Gastrocnemius medialis (tissue), 4 donors: ENCODE measurements at regions of chr10 and their contacts with region 1.

Region 1: DNA sequence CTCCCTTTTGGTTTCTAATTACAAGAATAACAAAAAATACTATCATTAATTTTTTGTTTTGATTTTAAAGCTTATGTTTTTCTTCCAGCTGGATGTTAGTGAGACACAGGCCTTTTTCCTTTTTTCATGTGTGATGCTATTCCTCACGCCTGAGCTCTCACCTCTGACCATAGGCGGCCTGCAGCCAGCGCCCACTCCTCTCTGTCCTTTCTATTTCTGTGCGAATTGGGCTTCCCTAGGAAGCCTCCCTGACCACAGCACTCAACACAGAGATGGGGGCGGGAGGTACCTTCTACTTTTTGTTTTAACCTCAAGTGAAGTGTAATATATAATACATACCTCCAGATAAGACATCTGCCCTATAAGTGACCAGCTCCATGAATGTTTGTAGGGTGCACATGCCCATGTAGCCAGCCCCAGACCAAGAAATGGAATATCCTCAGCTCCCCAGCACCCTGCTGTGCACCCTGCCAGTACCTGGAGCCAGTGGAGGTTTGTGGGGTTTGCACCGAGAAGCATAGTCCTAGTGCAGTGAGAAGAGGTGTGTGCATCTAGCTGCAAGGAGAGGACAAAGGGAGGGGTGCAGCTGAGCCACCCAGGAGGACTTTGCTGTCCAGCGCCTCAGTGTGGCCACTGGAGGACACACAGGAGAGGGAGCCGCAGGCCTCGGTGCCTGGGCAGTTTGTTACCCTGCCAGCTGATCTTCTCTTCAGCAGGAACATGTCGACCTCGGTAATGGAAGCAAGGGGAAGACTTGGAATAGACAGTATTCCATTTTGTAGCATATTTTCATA is 38.5 kb downstream of the BNIP3 start:
- DNase-seq: no peak
- ATAC-seq: no peak
- H3K4me3 ChIP-seq: no peak overlapping the region
- H3K27ac ChIP-seq: no peak overlapping the region
- H3K4me1 ChIP-seq: peaks cover under 1% of the 10 kb centered on the region in 2 donors
- H3K27me3 ChIP-seq: no peaks in the 10 kb centered on the region
- CTCF ChIP-seq: peak in 4 of 5 experiments; percentile 17 to 39 (median 32)
- POLR2A ChIP-seq: no peak

Region 2: GRCh38 chr10:131300508-131300907 is 642.7 kb before region 1 on chr10:
- in situ Hi-C with region 1: no loop called
- intact Hi-C with region 1: no loop called
- DNase-seq: no peak
- ATAC-seq: no peak
- H3K4me3 ChIP-seq: no peak overlapping the region
- H3K27ac ChIP-seq: no peak overlapping the region
- H3K4me1 ChIP-seq: no peaks in the 10 kb centered on the region
- H3K27me3 ChIP-seq: peaks cover 0 to 4% (median 0%) of the 10 kb centered on the region in 3 donors
- CTCF ChIP-seq: no peak
- POLR2A ChIP-seq: no peak

Region 3: DNA sequence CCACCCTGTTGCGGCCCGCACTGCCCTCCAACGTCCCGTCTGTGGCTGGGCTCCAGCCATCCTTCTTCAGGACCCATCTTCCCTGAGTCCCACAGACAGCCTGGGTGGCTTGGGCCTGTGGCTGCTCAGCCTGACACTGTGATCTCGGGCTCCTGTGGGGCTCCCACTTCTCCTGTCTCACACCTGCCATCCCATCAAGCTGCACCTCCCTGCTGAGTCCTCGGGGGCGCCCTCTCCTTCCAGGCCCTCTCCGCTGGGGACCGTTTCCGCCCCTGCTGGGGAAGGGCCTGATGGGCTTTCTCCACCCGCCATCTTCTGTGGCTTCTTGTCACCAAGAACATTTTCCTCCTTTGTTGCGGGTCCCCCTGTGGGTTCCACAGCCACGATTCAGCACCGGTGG is 216.3 kb before region 1 on chr10:
- in situ Hi-C with region 1: no loop called
- intact Hi-C with region 1: no loop called
- DNase-seq: no peak
- ATAC-seq: no peak
- H3K4me3 ChIP-seq: no peak overlapping the region
- H3K27ac ChIP-seq: no peak overlapping the region
- H3K4me1 ChIP-seq: no peaks in the 10 kb centered on the region
- H3K27me3 ChIP-seq: no peaks in the 10 kb centered on the region
- CTCF ChIP-seq: no peak
- POLR2A ChIP-seq: no peak

Region 4: GRCh38 chr10:132011024-132011423 is 67.8 kb after region 1 on chr10:
- in situ Hi-C with region 1: no loop called
- intact Hi-C with region 1: loop called (anchors 5 kb)
- DNase-seq: peak in 1 of 2 donors; percentile 51
- ATAC-seq: peak in 1 of 2 donors; percentile 22
- H3K4me3 ChIP-seq: no peak overlapping the region
- H3K27ac ChIP-seq: peak overlapping the region in 2 of 4 donors; percentile 51 to 60
- H3K4me1 ChIP-seq: peaks cover 16 to 35% of the 10 kb centered on the region in 2 donors
- H3K27me3 ChIP-seq: no peaks in the 10 kb centered on the region
- CTCF ChIP-seq: no peak
- POLR2A ChIP-seq: no peak